Dendritic cell treated with granulocyte-macrophage colony-stimulating factor and Interleukin-4, amounts not matched to agents 40 ng/mL and 50 ng/mL, for 4 days (primary cell): ENCODE measurements at regions of chr9 and their contacts with region 1.

Region 1: GRCh38 chr9:84397151-84397728 is 56.7 kb upstream of the SLC28A3 start:
- H3K4me3 Mint-ChIP-seq: no peak overlapping the region
- H3K27ac Mint-ChIP-seq: no peak overlapping the region
- H3K4me1 Mint-ChIP-seq: peaks cover 8% of the 10 kb centered on the region
- H3K27me3 Mint-ChIP-seq: no peaks in the 10 kb centered on the region

Region 2: GRCh38 chr9:85610074-85610860 is 1213.0 kb after region 1 on chr9:
- intact Hi-C with region 1: loop called (anchors 5 kb)
- H3K4me3 Mint-ChIP-seq: no peak overlapping the region
- H3K27ac Mint-ChIP-seq: no peak overlapping the region
- H3K4me1 Mint-ChIP-seq: peaks cover 13% of the 10 kb centered on the region
- H3K27me3 Mint-ChIP-seq: no peaks in the 10 kb centered on the region